ENCODE measurements at regions of chr5 and their contacts with region 1.

Region 1: GRCh38 chr5:134648425-134649162 is at the start of gene SEC24A:
- DNase-seq: peak; percentile 92 to 100 (median 96)
- H3K4me3 ChIP-seq: peak within 1 kb of the TSS; percentile 86 to 91 (median 91)
- H3K4me3 Mint-ChIP-seq: peak within 1 kb of the TSS; percentile 94 to 95
- H3K27ac ChIP-seq: peak within 1 kb of the TSS; percentile 98 to 99
- H3K27ac Mint-ChIP-seq: peak within 1 kb of the TSS; percentile 98 to 100 (median 100)
- H3K4me1 ChIP-seq: peaks cover 20 to 31% of the 10 kb centered on the region in 2 donors
- H3K4me1 Mint-ChIP-seq: peaks cover 32% of the 10 kb centered on the region
- H3K27me3 ChIP-seq: no peaks in the 10 kb centered on the region
- H3K27me3 Mint-ChIP-seq: peaks cover 0 to 2% (median 2%) of the 10 kb centered on the region in 3 donors
- CTCF ChIP-seq: no peak
- polyA plus RNA-seq, gene SEC24A: 4.9 to 8.5 (median 7.7) TPM

Region 2: DNA sequence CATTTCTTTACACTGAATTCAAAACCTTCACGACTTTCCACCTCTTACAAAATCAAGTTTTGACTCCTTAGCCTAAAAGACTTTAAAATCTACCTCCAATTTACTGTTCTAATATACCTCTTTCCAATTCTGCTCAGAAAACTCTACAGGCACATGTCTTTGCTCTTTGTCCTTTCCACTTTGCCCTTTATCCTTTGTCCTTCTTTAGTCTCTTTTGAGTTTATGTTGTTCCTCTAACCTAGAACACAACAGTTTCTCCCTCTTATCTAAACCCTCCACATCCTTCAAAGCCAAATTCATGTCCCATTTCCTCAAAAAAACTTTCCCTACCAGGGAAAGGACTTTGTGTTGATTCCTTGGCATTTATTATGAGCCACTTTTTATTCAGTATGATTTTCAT is 283.0 kb before region 1 on chr5:
- intact Hi-C with region 1: loop called in 1 of 2 experiments (anchors 5 kb)
- DNase-seq: no peak
- H3K4me3 ChIP-seq: no peak overlapping the region
- H3K4me3 Mint-ChIP-seq: peak overlapping the region in 1 of 2 donors; percentile 22
- H3K27ac ChIP-seq: no peak overlapping the region
- H3K27ac Mint-ChIP-seq: no peak overlapping the region
- H3K4me1 ChIP-seq: peaks cover 16 to 17% of the 10 kb centered on the region in 2 donors
- H3K4me1 Mint-ChIP-seq: peaks cover 21% of the 10 kb centered on the region
- H3K27me3 ChIP-seq: no peaks in the 10 kb centered on the region
- H3K27me3 Mint-ChIP-seq: peaks cover 2 to 9% (median 6%) of the 10 kb centered on the region in 3 donors
- CTCF ChIP-seq: no peak

Region 3: DNA sequence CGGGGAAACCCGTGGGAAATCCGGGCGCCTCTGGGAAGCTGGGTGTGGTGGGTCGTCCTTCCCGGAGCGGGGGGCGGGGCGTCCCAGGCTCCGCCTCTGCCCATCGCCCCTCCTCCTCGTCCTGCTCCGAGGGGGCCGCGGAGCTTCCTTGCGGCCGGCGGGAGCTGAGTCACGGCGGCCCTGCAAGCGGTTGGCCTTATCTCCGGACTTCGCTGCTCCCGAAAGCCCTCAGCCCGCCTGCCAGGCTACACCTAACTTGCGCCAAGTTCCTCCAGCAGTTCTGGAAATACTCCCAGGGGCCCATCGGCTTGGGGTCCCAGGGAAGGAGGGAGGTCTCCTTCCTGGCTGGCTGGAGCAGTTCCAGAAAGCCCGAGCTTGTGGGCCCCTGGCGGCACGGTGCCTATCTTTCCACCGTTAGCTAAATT is 182.8 kb before region 1 on chr5:
- intact Hi-C with region 1: no loop called
- DNase-seq: peak; percentile 50 to 84 (median 63)
- H3K4me3 ChIP-seq: peak overlapping the region; percentile 43 to 81 (median 61)
- H3K4me3 Mint-ChIP-seq: peak overlapping the region; percentile 80 to 91
- H3K27ac ChIP-seq: peak overlapping the region; percentile 74 to 90
- H3K27ac Mint-ChIP-seq: peak overlapping the region; percentile 82 to 94 (median 91)
- H3K4me1 ChIP-seq: peaks cover 35 to 38% of the 10 kb centered on the region in 2 donors
- H3K4me1 Mint-ChIP-seq: peaks cover 34% of the 10 kb centered on the region
- H3K27me3 ChIP-seq: no peaks in the 10 kb centered on the region
- H3K27me3 Mint-ChIP-seq: peaks cover 1 to 9% (median 2%) of the 10 kb centered on the region in 3 donors
- CTCF ChIP-seq: no peak

Region 4: GRCh38 chr5:134637161-134637582 is 11.4 kb before region 1 on chr5:
- intact Hi-C with region 1: loop called (anchors 2 kb)
- DNase-seq: no peak
- H3K4me3 ChIP-seq: no peak overlapping the region
- H3K4me3 Mint-ChIP-seq: no peak overlapping the region
- H3K27ac ChIP-seq: no peak overlapping the region
- H3K27ac Mint-ChIP-seq: no peak overlapping the region
- H3K4me1 ChIP-seq: peaks cover 1 to 5% of the 10 kb centered on the region in 2 donors
- H3K4me1 Mint-ChIP-seq: no peaks in the 10 kb centered on the region
- H3K27me3 ChIP-seq: no peaks in the 10 kb centered on the region
- H3K27me3 Mint-ChIP-seq: peaks cover 3 to 5% (median 3%) of the 10 kb centered on the region in 3 donors
- CTCF ChIP-seq: no peak